ENCODE measurements at regions of chr16 and their contacts with region 1.

Region 1: DNA sequence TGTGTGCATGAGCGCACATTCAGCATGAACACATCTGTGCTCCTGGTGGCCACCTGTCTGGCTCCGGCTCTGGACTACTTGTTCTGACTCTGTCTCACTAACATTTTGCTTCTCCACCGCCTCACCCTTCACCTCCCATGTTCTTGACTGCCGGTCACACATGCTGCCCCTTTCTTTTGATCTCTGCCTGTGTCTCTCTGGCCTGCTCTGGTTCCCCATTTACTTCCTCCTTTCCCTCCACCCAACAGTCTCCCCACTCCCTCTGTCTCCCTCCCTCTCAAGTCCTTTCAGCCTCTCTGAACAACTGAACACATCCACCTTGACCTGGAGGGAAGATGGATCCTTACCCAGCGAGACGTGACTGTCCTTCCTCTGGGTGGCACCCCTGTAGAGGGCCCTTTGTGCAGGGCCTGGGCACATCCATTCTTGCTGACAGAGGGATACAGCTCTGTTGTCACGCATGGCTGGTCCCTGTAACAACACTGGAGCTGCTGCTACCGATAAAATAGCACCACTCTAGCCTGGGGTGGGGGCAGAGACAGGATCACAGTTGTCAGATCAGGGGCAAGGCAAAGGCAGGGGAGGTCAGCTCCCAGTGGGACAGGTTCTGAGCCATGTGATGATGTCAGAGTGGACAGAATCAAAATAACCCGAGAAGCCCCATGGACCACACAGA is 11.0 kb downstream of the ZSCAN32 start:
- DNase-seq: no peak
- ATAC-seq: no peak
- H3K4me3 ChIP-seq: no peak overlapping the region
- H3K27ac ChIP-seq: no peak overlapping the region
- H3K4me1 ChIP-seq: no peaks in the 10 kb centered on the region
- H3K27me3 ChIP-seq: no peaks in the 10 kb centered on the region
- CTCF ChIP-seq: no peak
- POLR2A ChIP-seq: no peak
- RAD21 ChIP-seq: no peak

Region 2: DNA sequence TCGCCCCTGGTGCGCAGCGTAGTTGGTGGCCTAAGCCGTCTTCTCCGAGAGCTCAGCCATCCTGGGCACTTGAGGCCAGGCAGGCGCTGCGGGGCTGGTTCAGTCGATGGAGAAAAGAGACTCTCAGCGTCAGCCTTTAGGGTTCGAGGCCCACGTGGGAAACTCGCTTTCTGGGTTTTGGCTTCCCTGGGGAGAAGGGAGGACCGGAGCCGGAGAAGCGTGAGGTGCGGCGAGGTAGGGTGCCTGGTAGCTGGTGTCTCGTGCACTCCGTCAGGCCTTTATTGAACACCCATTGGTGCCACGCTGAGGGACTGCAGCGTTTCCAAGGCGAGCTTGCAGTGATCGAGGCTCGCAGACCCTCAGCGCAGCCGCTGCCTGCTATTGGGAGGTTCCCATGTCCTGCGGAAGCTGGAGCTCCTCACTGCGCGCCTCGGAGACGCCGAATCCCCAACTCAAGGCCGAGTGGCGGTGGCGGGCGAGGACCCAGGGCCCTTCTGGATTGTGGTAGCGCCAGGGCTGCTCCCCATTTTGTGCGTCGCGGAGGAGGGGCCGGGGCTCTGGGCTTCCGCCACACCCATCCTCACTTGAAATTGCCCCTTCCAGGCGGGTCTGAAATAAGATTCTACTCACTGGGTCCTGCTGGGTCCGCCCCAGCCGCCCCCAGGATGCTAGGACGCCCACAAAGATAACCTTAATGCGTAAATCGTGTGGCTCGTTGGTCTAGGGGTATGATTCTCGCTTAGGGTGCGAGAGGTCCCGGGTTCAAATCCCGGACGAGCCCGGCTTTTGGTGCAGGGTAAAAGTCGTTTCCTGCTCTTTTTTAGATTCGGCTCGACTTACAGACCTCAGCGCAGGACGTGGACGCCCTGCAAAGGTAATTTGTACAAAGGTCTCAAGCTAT is 200.6 kb before region 1 on chr16:
- CTCF ChIA-PET with region 1: no interaction called
- POLR2A ChIA-PET with region 1: no interaction called
- RAD21 ChIA-PET with region 1: no interaction called
- intact Hi-C with region 1: no loop called
- DNase-seq: no peak
- ATAC-seq: peak; percentile 26
- H3K4me3 ChIP-seq: no peak overlapping the region
- H3K27ac ChIP-seq: no peak overlapping the region
- H3K4me1 ChIP-seq: peaks cover 11 to 42% of the 10 kb centered on the region in 2 experiments; a peak in 3 of 4 replicates
- H3K27me3 ChIP-seq: no peaks in the 10 kb centered on the region
- CTCF ChIP-seq: no peak
- POLR2A ChIP-seq: no peak
- RAD21 ChIP-seq: no peak

Region 3: DNA sequence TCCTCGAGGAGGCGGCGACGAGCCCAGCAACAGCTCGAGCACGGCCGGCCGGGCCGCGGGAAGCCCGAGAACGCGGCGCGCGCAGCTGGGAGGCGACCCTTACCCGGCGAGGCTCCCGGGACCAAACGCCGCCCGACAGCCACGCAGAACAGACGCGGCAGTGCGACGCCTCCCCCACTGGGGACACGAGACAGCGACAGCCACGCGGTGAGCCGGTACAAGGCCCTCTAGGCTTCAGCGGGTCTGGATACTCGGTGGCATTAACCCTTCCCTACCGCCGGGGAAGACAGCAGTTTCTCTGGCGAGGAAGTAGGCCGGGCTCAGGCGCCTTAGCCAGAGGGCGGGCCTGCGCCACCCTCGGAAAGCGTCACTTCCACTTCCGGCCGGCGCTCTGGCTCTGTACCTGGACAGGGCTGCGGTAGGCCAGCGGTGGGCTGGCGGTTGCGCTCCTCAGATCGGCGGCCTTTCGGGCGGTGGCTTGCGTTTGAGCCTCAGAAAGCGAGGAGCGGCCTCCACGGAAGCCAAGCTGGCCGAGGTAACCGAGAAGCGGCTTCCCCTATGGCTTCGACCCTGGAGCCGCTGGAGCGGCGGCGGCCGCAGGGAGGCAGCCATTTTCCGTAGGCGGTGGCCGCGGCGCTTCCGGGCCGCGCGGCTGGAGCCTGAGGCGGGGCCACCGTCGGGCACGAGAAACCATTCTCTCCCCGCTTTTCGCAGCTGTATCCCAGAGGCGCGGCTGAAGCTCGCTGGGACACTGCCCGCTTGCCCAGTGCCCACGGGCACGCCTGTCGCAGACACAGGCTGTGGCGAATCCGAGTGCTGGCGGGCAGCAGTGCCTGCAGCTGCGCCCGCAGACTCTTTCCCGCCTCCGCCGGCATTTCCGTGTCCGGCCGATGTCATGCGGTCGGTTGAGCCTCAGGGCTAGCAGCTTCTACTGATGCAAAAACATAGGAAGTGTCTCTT is 84.4 kb before region 1 on chr16 and contains the starts of genes TIGD7 and ZNF75A:
- CTCF ChIA-PET with region 1: no interaction called
- POLR2A ChIA-PET with region 1: no interaction called
- RAD21 ChIA-PET with region 1: no interaction called
- intact Hi-C with region 1: loop called (anchors 10 kb)
- DNase-seq: peak; percentile 51
- ATAC-seq: peak; percentile 96
- H3K4me3 ChIP-seq: peak within 1 kb of the TSS; percentile 51 to 60
- H3K27ac ChIP-seq: peak within 1 kb of the TSS; percentile 79
- H3K4me1 ChIP-seq: peaks cover 0 to 19% of the 10 kb centered on the region in 2 experiments; a peak in 2 of 4 replicates
- H3K27me3 ChIP-seq: no peaks in the 10 kb centered on the region
- CTCF ChIP-seq: no peak
- POLR2A ChIP-seq: no peak
- RAD21 ChIP-seq: no peak
- total RNA-seq, gene TIGD7: 0.49 TPM
- total RNA-seq, gene ZNF75A: 10.3 TPM

Measured in HCT116 (cell line).